ENCODE measurements at regions of chr1 and their contacts with region 1.

Region 1: GRCh38 chr1:150268705-150269403 is at the start of gene APH1A:
- DNase-seq: peak; percentile 95 to 97 (median 97)
- H3K4me3 ChIP-seq: peak within 1 kb of the TSS; percentile 84 to 96 (median 89)
- H3K27ac ChIP-seq: peak within 1 kb of the TSS; percentile 86 to 94
- H3K4me1 ChIP-seq: peaks cover 6 to 30% (median 15%) of the 10 kb centered on the region in 4 experiments
- H3K27me3 ChIP-seq: no peaks in the 10 kb centered on the region

Region 2: DNA sequence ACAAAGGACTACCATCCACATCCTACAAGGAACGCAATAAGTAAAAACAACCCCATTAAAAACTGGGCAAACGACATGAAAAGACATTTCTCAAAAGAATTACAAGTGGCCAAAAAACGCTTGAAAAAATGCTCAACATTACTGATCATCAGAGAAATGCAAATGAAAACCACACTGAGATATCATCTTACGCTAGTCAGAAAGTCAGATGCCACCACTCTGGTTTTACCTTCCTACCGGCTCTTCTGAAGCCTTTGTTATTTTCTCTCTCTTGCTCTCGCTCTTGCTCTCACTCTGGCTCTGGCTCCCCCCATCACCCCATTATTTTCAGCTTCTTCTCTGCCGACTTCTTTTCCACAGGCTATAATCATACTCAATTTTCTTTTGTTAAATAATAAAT is 162.5 kb before region 1 on chr1:
- CTCF ChIA-PET with region 1: no interaction called
- POLR2A ChIA-PET with region 1: no interaction called
- DNase-seq: peak in 1 of 3 donors; percentile 9
- H3K4me3 ChIP-seq: no peak overlapping the region
- H3K27ac ChIP-seq: no peak overlapping the region
- H3K4me1 ChIP-seq: peaks cover 3 to 21% (median 15%) of the 10 kb centered on the region in 4 experiments
- H3K27me3 ChIP-seq: no peaks in the 10 kb centered on the region

Region 3: DNA sequence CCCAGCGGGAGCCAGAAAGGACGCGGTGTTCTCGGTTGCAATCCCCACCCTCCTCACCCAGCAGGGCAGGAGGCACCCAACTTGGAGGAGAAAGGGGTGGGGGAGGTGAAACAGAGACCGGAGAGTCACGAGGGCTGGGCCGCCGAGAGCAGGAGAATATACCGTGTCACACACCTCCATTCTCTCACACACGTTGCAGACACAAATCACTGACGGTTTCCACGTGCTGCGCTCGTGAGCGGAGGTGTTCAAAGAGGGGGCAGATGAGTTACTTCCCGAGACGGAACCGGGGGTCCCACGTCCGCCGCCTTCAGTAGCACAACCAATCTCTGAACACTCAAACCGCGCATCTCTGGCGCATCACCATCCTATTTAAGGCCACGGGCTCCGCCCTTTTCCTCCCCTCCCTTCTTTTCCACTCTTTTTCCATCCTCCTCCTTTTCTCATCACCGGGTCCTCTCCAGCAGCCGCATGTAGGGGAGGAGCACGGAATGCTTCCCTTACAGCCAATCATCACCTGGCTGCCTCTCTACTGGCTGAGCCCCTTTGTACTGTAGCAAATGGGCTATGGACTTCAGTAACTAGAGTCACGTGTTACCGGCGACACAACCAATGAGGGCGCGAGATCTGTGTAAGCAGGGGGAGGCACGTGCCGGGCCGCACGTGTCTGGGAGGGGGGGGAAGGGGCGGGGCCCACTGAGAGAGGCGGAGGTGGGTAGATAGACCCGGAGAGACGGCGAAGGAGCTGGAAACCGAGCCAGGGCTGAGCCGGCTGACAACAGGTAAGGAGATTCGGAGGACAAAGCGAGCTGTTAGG is 13.2 kb after region 1 on chr1 and contains the start of gene CIART:
- CTCF ChIA-PET with region 1: interaction called, 246 read pairs
- POLR2A ChIA-PET with region 1: interaction called, 3 read pairs
- DNase-seq: peak; percentile 91 to 98 (median 96)
- H3K4me3 ChIP-seq: peak within 1 kb of the TSS in 6 of 7 experiments; percentile 24 to 76 (median 60)
- H3K27ac ChIP-seq: no peak within 1 kb of the TSS
- H3K4me1 ChIP-seq: peaks cover 6 to 18% (median 14%) of the 10 kb centered on the region in 4 experiments
- H3K27me3 ChIP-seq: peaks cover 0 to 16% (median 8%) of the 10 kb centered on the region in 5 experiments

Region 4: DNA sequence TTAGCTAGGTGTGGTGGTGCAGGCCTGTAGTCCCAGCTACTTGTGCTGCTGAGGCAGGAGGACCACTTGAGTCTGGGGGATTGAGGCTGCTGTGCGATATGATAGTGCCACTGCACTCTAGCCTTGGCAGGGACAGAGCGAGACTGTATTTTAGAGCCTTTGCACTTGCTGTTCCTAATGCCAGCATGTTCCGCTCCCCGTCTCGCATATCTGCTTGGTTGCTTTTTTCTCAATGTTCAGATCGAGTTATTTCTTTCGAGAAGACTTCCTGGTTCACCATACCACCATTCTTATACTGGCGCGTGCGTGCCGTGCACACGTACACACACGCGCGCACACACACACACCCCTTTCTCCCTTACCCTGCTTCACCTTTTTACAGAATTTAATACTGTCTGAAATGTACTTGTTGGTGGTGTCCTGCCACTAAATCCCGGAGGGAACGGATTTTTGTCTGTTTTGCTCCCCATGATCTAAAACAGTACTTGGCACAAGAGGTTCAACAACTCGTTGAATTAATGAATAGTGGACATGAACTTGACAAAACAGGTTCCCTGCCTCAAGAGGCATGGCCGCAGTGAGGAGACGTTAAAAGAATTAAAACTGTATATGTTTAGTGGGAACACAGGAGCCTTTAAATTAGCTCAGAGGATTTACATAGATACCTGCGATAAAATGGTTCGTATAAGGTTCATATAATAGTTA is 94.0 kb after region 1 on chr1:
- CTCF ChIA-PET with region 1: no interaction called
- POLR2A ChIA-PET with region 1: no interaction called
- DNase-seq: no peak
- H3K4me3 ChIP-seq: peak overlapping the region in 6 of 7 experiments; percentile 31 to 99 (median 96)
- H3K27ac ChIP-seq: peak overlapping the region; percentile 86 to 94
- H3K4me1 ChIP-seq: peaks cover 7 to 29% (median 18%) of the 10 kb centered on the region in 4 experiments
- H3K27me3 ChIP-seq: no peaks in the 10 kb centered on the region

Measured in common myeloid progenitor, CD34-positive (primary cell).